CD4-positive, alpha-beta memory T cell (primary cell): ENCODE measurements at regions of chr2 and their contacts with region 1.

Region 1: DNA sequence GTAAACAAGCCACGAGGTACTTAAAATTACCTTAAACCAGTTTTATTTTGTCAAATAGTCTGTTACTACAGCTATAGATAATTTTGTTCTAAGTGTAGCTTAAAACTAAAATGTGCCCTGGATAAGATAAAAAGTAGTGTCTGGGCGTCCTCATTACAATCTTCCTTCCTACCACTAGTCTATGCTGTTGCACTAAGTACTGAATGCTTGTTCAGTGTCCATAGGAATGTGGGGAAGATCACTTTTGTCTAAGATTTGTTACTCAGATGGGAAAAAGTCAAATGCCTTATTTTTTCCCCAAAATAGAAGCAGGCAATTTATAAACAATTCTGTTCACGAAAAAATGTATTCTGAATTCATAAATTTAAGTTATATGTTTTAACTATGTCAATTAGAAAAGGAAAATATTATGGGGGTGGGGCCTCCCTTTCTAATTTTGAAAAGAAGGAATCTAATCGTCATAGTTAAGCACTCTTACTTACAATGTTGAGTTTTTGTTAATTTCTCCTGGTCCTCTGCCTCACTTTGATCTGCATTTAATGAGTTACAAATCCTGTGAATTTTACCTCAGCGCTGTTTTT is 140.4 kb upstream of the VRK2 start:
- DNase-seq: peak in 3 of 5 donors; percentile 17 to 21 (median 21)
- H3K4me3 ChIP-seq: no peak overlapping the region
- H3K4me3 Mint-ChIP-seq: no peak overlapping the region
- H3K27ac ChIP-seq: no peak overlapping the region
- H3K27ac Mint-ChIP-seq: no peak overlapping the region
- H3K4me1 ChIP-seq: peaks cover 28% of the 10 kb centered on the region
- H3K4me1 Mint-ChIP-seq: peaks cover 18 to 26% (median 20%) of the 10 kb centered on the region in 4 donors
- H3K27me3 ChIP-seq: no peaks in the 10 kb centered on the region
- H3K27me3 Mint-ChIP-seq: no peaks in the 10 kb centered on the region

Region 2: GRCh38 chr2:58871469-58872142 is 965.4 kb after region 1 on chr2:
- CTCF ChIA-PET with region 1: no interaction called
- POLR2A ChIA-PET with region 1: no interaction called
- intact Hi-C with region 1: loop called (anchors 10 kb)
- DNase-seq: no peak
- H3K4me3 ChIP-seq: no peak overlapping the region
- H3K4me3 Mint-ChIP-seq: no peak overlapping the region
- H3K27ac ChIP-seq: no peak overlapping the region
- H3K27ac Mint-ChIP-seq: no peak overlapping the region
- H3K4me1 ChIP-seq: no peaks in the 10 kb centered on the region
- H3K4me1 Mint-ChIP-seq: no peaks in the 10 kb centered on the region
- H3K27me3 ChIP-seq: no peaks in the 10 kb centered on the region
- H3K27me3 Mint-ChIP-seq: peaks cover 0 to 2% of the 10 kb centered on the region in 2 donors